ENCODE measurements at regions of chr5 and their contacts with region 1.

Region 1: GRCh38 chr5:154072414-154073171 is 33.8 kb downstream of the MFAP3 start:
- DNase-seq: peak; percentile 19 to 93
- H3K4me3 ChIP-seq: no peak overlapping the region
- H3K27ac ChIP-seq: no peak overlapping the region
- H3K4me1 ChIP-seq: peaks cover 0 to 6% (median 0%) of the 10 kb centered on the region in 4 experiments; a peak in 2 of 7 replicates
- H3K27me3 ChIP-seq: no peaks in the 10 kb centered on the region
- CTCF ChIP-seq: peak; percentile 83 to 96 (median 91)
- EP300 ChIP-seq: no peak
- POLR2A ChIP-seq: no peak
- RAD21 ChIP-seq: peak; percentile 100

Region 2: GRCh38 chr5:154049636-154050035 is 23.0 kb before region 1 on chr5:
- CTCF ChIA-PET with region 1: interaction called, 33 read pairs
- POLR2A ChIA-PET with region 1: no interaction called
- DNase-seq: no peak
- H3K4me3 ChIP-seq: no peak overlapping the region
- H3K27ac ChIP-seq: no peak overlapping the region
- H3K4me1 ChIP-seq: no peaks in the 10 kb centered on the region
- H3K27me3 ChIP-seq: no peaks in the 10 kb centered on the region
- CTCF ChIP-seq: no peak
- EP300 ChIP-seq: no peak
- POLR2A ChIP-seq: no peak
- RAD21 ChIP-seq: no peak

Region 3: GRCh38 chr5:154092356-154093141 is 20.0 kb after region 1 on chr5:
- CTCF ChIA-PET with region 1: interaction called, 19 read pairs
- POLR2A ChIA-PET with region 1: interaction called, 3 read pairs
- DNase-seq: no peak
- H3K4me3 ChIP-seq: no peak overlapping the region
- H3K27ac ChIP-seq: no peak overlapping the region
- H3K4me1 ChIP-seq: peaks cover 0 to 5% (median under 1%) of the 10 kb centered on the region in 4 experiments; a peak in 2 of 7 replicates
- H3K27me3 ChIP-seq: no peaks in the 10 kb centered on the region
- CTCF ChIP-seq: no peak
- EP300 ChIP-seq: no peak
- POLR2A ChIP-seq: no peak
- RAD21 ChIP-seq: no peak

Region 4: DNA sequence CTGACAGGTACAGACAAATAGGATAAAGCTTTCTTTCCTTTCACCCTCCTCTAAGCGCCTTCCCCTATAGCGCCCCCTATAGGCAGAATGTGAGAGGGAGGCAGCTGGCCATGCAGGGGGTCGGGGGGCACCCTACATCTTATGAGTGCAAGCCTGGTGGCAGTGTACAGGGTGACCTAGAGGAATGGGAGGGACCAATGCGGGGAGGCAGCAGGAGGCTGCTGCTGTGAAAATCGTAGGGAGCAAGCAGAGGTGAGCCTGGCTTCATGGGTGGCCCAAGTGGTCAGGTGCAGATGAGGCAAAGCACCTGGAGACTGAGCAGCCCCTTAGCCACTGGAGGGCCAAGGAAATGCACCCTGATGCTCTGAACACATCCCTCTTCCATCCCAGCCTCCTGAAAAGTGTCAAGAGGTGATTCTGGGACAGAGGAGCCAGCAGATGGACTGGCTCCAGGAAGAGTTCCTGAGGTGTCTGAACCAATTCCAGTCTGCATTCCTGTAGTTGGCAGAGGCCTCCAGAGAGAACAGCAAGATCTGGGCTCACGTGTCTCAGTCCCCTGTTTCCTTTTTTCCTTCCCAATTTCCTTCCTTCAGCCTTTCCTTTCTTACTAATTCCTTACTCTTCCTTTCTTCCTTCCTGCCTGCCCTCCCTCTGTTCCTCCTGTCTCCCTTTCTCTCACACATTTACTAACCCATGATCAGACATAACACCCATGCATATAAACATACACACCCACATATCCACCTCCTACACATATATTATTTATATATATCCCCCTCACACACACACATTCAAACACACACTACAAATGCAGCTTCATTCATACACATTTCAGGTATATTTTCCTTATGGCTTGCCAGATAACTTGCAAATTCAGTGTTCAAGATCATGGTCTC is 85.1 kb after region 1 on chr5:
- CTCF ChIA-PET with region 1: interaction called, 53 read pairs
- POLR2A ChIA-PET with region 1: interaction called, 4 read pairs
- DNase-seq: peak in 1 of 2 experiments; percentile 82
- H3K4me3 ChIP-seq: no peak overlapping the region
- H3K27ac ChIP-seq: no peak overlapping the region; the same call in 1 of the 2 replicates
- H3K4me1 ChIP-seq: peaks cover 0 to 3% (median 1%) of the 10 kb centered on the region in 4 experiments; a peak in 1 of 7 replicates
- H3K27me3 ChIP-seq: no peaks in the 10 kb centered on the region
- CTCF ChIP-seq: peak; percentile 65 to 76 (median 75)
- EP300 ChIP-seq: no peak
- POLR2A ChIP-seq: no peak
- RAD21 ChIP-seq: peak; percentile 56 to 58

Region 5: GRCh38 chr5:154189819-154190594 is 117.4 kb after region 1 on chr5:
- CTCF ChIA-PET with region 1: interaction called, 211 read pairs
- POLR2A ChIA-PET with region 1: interaction called, 3 read pairs
- DNase-seq: peak in 1 of 2 experiments; percentile 84
- H3K4me3 ChIP-seq: peak overlapping the region; percentile 45 to 77 (median 56)
- H3K27ac ChIP-seq: peak overlapping the region; percentile 71; the same call in 1 of the 2 replicates
- H3K4me1 ChIP-seq: peaks cover 6 to 18% (median 10%) of the 10 kb centered on the region in 4 experiments; a peak in 5 of 7 replicates
- H3K27me3 ChIP-seq: peaks cover 12 to 50% (median 39%) of the 10 kb centered on the region in 4 experiments
- CTCF ChIP-seq: peak in 2 of 3 experiments; percentile 16 to 27; a peak in 3 of 4 replicates
- EP300 ChIP-seq: peak in 1 of 2 experiments; percentile 73; a peak in 1 of 3 replicates
- POLR2A ChIP-seq: no peak; a peak in 1 of 3 replicates
- RAD21 ChIP-seq: peak in 1 of 2 experiments; percentile 11; a peak in 1 of 4 replicates

Region 6: GRCh38 chr5:154397652-154398406 is 325.2 kb after region 1 on chr5:
- CTCF ChIA-PET with region 1: interaction called, 61 read pairs
- POLR2A ChIA-PET with region 1: no interaction called
- DNase-seq: no peak
- H3K4me3 ChIP-seq: no peak overlapping the region
- H3K27ac ChIP-seq: no peak overlapping the region
- H3K4me1 ChIP-seq: peaks cover 4 to 10% (median 7%) of the 10 kb centered on the region in 4 experiments
- H3K27me3 ChIP-seq: no peaks in the 10 kb centered on the region
- CTCF ChIP-seq: no peak
- EP300 ChIP-seq: no peak
- POLR2A ChIP-seq: no peak
- RAD21 ChIP-seq: no peak

Region 7: GRCh38 chr5:154421868-154422267 is 349.3 kb after region 1 on chr5:
- CTCF ChIA-PET with region 1: interaction called, 12 read pairs
- POLR2A ChIA-PET with region 1: no interaction called
- DNase-seq: no peak
- H3K4me3 ChIP-seq: no peak overlapping the region
- H3K27ac ChIP-seq: no peak overlapping the region
- H3K4me1 ChIP-seq: peaks cover 0 to 4% (median 0%) of the 10 kb centered on the region in 4 experiments; a peak in 1 of 7 replicates
- H3K27me3 ChIP-seq: no peaks in the 10 kb centered on the region
- CTCF ChIP-seq: peak; percentile 71 to 83 (median 77)
- EP300 ChIP-seq: no peak
- POLR2A ChIP-seq: no peak
- RAD21 ChIP-seq: peak; percentile 87 to 88

Measured in H1 (cell line).